Activated B cell treated with CpG ODN at 0.5 μM for 24 hours (primary cell): ENCODE measurements at regions of chr1 and their contacts with region 1.

Region 1: GRCh38 chr1:12153181-12153785 is 13.5 kb upstream of the TNFRSF1B start:
- DNase-seq: peak; percentile 47
- ATAC-seq: peak; percentile 40
- H3K4me3 Mint-ChIP-seq: peak overlapping the region; percentile 52
- H3K27ac Mint-ChIP-seq: peak overlapping the region; percentile 92
- H3K4me1 Mint-ChIP-seq: peaks cover 91% of the 10 kb centered on the region
- H3K27me3 Mint-ChIP-seq: no peaks in the 10 kb centered on the region
- CTCF ChIP-seq: no peak

Region 2: DNA sequence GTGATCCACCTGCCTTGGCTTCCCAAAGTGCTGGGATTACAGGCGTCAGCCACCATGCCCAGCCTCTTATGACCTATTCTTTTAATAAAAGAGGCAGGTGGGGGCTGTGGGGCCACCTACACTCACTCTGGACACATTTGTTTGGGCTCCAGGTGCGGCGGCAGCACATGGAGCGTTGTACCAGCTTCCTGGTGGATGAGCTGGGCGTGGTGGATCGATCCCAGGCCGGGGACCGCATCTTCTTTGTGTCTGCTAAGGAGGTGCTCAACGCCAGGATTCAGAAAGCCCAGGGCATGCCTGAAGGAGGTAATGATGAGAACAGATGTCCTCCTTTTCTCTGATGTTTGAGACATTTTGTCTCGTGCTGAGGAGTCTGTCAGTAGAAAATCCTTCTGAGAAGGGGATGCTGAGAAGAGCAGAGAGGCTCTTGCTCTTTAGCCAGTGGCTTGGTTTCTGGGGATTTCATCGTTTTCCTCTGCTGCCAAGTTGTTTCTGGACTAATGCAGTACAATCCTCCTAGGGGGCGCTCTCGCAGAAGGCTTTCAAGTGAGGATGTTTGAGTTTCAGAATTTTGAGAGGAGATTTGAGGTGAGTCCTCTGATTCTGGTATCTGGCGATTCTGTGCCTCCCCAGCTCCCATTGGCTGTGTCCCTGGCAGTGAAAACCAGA is 151.9 kb before region 1 on chr1:
- CTCF ChIA-PET with region 1: no interaction called
- POLR2A ChIA-PET with region 1: interaction called, 11 read pairs
- intact Hi-C with region 1: no loop called
- DNase-seq: no peak
- ATAC-seq: no peak
- H3K4me3 Mint-ChIP-seq: no peak overlapping the region
- H3K27ac Mint-ChIP-seq: no peak overlapping the region
- H3K4me1 Mint-ChIP-seq: peaks cover 11% of the 10 kb centered on the region
- H3K27me3 Mint-ChIP-seq: no peaks in the 10 kb centered on the region
- CTCF ChIP-seq: no peak

Region 3: GRCh38 chr1:12087797-12088314 is 65.4 kb before region 1 on chr1:
- CTCF ChIA-PET with region 1: interaction called, 4 read pairs
- POLR2A ChIA-PET with region 1: interaction called, 3 read pairs
- intact Hi-C with region 1: loop called (anchors 2 kb)
- DNase-seq: peak; percentile 45
- ATAC-seq: peak; percentile 88
- H3K4me3 Mint-ChIP-seq: peak overlapping the region; percentile 53
- H3K27ac Mint-ChIP-seq: peak overlapping the region; percentile 95
- H3K4me1 Mint-ChIP-seq: peaks cover 45% of the 10 kb centered on the region
- H3K27me3 Mint-ChIP-seq: no peaks in the 10 kb centered on the region
- CTCF ChIP-seq: no peak

Region 4: GRCh38 chr1:12132092-12132491 is 21.2 kb before region 1 on chr1:
- CTCF ChIA-PET with region 1: no interaction called
- POLR2A ChIA-PET with region 1: interaction called, 86 read pairs
- intact Hi-C with region 1: loop called (anchors 2 kb)
- DNase-seq: no peak
- ATAC-seq: no peak
- H3K4me3 Mint-ChIP-seq: no peak overlapping the region
- H3K27ac Mint-ChIP-seq: peak overlapping the region; percentile 85
- H3K4me1 Mint-ChIP-seq: peaks cover 35% of the 10 kb centered on the region
- H3K27me3 Mint-ChIP-seq: no peaks in the 10 kb centered on the region
- CTCF ChIP-seq: no peak

Region 5: DNA sequence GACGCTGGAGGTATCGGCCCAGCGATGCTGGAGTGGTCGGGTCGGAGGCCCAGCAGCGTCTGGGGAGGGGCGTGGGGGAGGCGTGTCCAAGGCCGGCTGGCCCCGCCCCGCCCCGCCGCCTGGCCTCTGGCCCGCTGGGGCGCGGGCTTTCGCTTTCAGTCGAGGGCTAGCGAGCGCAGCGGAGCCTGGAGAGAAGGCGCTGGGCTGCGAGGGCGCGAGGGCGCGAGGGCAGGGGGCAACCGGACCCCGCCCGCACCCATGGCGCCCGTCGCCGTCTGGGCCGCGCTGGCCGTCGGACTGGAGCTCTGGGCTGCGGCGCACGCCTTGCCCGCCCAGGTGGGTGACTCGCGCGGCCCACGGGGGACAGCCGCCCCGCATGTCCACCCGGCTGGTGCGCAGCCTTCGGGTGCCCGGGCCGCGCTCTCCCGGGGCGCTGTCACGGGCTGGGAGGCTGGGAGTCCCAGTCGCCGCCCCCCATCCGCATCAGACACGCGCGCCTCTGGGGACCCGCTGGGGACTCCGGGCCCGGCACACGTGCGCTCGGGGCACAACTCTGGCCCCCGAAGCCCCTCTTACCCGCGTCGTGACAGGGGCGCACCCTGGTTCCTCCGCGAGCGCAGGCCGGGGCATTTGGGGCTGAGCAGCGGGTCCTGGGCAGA is 13.7 kb after region 1 on chr1 and contains the start of gene TNFRSF1B:
- CTCF ChIA-PET with region 1: interaction called, 6 read pairs
- POLR2A ChIA-PET with region 1: interaction called, 187 read pairs
- intact Hi-C with region 1: loop called (anchors 1 kb)
- DNase-seq: peak; percentile 70
- ATAC-seq: peak; percentile 72
- H3K4me3 Mint-ChIP-seq: peak within 1 kb of the TSS; percentile 97
- H3K27ac Mint-ChIP-seq: peak within 1 kb of the TSS; percentile 92
- H3K4me1 Mint-ChIP-seq: peaks cover 71% of the 10 kb centered on the region
- H3K27me3 Mint-ChIP-seq: no peaks in the 10 kb centered on the region
- CTCF ChIP-seq: no peak
- total RNA-seq, gene TNFRSF1B: 89.0 and 98.6 TPM in 2 replicates